GM13977 (cell line): ENCODE measurements at regions of chr9 and their contacts with region 1.

Region 1: DNA sequence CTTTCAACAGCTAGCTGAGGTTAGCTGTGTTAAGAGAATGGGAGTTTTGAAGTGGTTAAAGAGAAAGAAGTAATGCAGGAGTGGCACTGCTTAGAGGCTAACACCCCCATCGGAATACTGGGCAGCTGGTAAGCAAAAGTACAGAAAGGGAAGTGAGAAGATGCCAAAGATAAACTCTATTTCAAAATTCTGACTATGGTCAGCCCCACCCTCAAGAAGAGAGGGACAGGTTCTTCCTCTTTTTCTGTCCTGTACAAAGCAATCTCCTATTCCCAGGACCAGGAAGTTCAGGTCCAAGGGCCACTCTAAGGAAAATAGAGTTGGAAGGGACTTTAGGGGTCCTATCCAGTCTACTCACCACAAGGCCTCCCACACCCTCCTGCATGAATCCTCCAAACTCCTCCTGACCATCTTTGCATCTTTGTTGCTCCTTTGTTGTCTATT is 45.9 kb upstream of the JAK2 start:
- DNase-seq: peak; percentile 20
- CTCF ChIP-seq: no peak

Region 2: GRCh38 chr9:4984621-4985385 is 45.7 kb after region 1 on chr9 and contains the start of gene JAK2:
- in situ Hi-C with region 1: loop called (anchors 10 kb)
- DNase-seq: peak; percentile 82
- CTCF ChIP-seq: peak; percentile 61

Region 3: DNA sequence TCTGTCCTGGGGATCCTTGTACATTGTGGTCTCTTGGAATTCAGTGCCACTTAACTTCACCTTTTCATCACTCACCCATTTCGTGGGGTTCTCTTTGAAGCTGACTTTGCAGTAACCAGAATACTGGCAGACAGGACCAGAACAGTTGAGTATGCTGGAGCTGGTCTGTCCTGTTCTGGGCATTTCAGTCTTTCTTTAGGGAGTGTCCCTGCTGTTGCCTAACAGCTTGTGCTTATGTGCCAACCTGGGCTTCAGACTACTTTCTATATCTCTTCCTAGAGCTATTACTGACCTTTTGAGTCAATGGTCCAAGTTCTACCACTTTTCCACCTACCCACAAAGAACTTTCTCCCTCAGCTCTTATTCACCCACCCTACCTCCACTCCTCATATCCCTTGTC is 256.3 kb after region 1 on chr9:
- in situ Hi-C with region 1: no loop called
- DNase-seq: no peak
- CTCF ChIP-seq: no peak